ENCODE measurements at regions of chr17 and their contacts with region 1.

Region 1: GRCh38 chr17:48804925-48805411 is 12.1 kb downstream of the TTLL6 start:
- DNase-seq: peak; percentile 74
- ATAC-seq: peak; percentile 91
- H3K4me3 Mint-ChIP-seq: no peak overlapping the region
- H3K27ac Mint-ChIP-seq: no peak overlapping the region
- H3K4me1 Mint-ChIP-seq: peaks cover 2% of the 10 kb centered on the region
- H3K27me3 Mint-ChIP-seq: peaks cover 31% of the 10 kb centered on the region

Region 2: GRCh38 chr17:48757524-48757961 is 47.4 kb before region 1 on chr17:
- CTCF ChIA-PET with region 1: no interaction called
- DNase-seq: no peak
- ATAC-seq: no peak
- H3K4me3 Mint-ChIP-seq: no peak overlapping the region
- H3K27ac Mint-ChIP-seq: no peak overlapping the region
- H3K4me1 Mint-ChIP-seq: no peaks in the 10 kb centered on the region
- H3K27me3 Mint-ChIP-seq: peaks cover 84% of the 10 kb centered on the region

Region 3: DNA sequence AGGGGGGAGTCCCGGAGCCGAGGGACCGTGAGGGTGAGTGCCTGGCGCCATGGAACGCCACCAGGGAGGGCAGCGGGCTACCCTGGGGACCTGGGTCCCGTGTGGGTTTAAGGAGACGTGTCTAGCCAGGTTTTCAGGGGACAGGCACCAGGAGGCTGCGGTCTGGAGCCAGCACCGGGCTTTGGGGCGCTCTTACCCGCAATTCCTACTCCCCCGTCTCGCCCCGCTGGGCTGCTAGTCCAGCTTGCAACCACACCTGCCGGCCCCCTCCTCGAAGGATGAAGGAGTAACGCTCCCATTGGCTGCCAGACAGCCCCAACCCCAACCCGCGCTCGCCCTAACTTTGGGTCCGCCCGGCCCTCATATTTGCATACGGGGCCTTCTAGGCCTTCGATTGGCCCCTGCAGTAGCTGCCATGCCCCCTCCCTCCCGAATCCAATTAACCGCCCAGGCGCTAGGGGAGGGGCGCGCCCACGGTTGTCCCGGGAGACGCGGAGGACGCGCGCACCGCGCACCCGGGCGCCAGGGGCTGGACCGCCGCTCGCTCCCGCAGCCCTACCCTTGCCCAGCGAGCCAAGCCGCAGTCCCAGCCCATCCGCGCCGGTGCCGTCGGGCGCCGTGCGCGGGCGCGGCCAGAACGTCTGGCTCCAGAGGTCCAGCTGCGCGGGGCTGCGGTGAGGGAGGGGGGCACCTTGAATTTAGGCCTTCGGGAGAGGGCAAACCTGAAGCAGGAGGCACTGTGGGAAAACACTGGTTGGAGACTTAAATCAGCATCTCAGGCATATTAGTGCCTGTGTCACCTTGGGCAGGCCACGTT is 12.0 kb after region 1 on chr17 and contains the start of gene TTLL6:
- CTCF ChIA-PET with region 1: interaction called, 19 read pairs
- DNase-seq: peak; percentile 84
- ATAC-seq: peak; percentile 98
- H3K4me3 Mint-ChIP-seq: peak within 1 kb of the TSS; percentile 61
- H3K27ac Mint-ChIP-seq: no peak within 1 kb of the TSS
- H3K4me1 Mint-ChIP-seq: peaks cover 24% of the 10 kb centered on the region
- H3K27me3 Mint-ChIP-seq: peaks cover 62% of the 10 kb centered on the region
- total RNA-seq, gene TTLL6: not detected

Region 4: GRCh38 chr17:48871551-48872351 is 66.8 kb after region 1 on chr17:
- CTCF ChIA-PET with region 1: interaction called, 714 read pairs
- DNase-seq: no peak
- ATAC-seq: no peak
- H3K4me3 Mint-ChIP-seq: no peak overlapping the region
- H3K27ac Mint-ChIP-seq: no peak overlapping the region
- H3K4me1 Mint-ChIP-seq: peaks cover 10% of the 10 kb centered on the region
- H3K27me3 Mint-ChIP-seq: no peaks in the 10 kb centered on the region

Region 5: GRCh38 chr17:49031965-49032928 is 227.3 kb after region 1 on chr17:
- CTCF ChIA-PET with region 1: interaction called, 22 read pairs
- DNase-seq: peak; percentile 65
- ATAC-seq: peak; percentile 79
- H3K4me3 Mint-ChIP-seq: no peak overlapping the region
- H3K27ac Mint-ChIP-seq: no peak overlapping the region
- H3K4me1 Mint-ChIP-seq: peaks cover 6% of the 10 kb centered on the region
- H3K27me3 Mint-ChIP-seq: no peaks in the 10 kb centered on the region